ENCODE measurements at regions of chr10 and their contacts with region 1.

Region 1: DNA sequence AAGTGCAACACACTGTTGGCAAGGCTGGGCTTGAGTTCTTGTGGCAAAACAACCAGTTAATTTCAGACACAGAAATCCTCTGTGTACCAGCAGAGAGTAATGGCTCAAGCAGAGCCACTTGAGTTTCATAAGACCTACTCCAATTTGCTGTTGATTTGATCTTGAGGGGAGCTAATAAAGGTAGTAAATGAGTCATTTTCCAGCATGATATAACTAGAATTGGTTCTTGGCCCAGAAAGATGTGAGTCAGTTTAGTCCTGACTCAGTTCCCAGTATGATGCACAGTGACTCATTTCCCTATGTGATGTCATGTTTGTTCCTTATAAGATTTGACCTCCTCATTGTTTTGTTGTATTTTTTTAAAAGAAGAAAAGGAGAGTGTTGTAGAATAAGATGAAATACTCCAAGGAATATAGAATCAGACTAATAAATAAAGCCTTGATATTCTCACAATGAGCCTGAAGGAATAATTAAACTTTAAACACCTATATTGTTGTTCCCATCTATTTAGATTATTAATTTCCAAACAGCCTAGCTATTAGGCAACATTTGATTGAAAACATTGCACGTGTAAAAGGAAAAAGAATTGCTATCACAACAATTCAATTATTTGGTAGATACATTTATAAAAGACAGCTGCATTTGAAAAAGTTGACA is 186.2 kb downstream of the REEP3 start:
- DNase-seq: peak; percentile 58
- H3K4me3 Mint-ChIP-seq: no peak overlapping the region
- H3K27ac Mint-ChIP-seq: peak overlapping the region; percentile 27
- H3K4me1 Mint-ChIP-seq: peaks cover 17% of the 10 kb centered on the region
- H3K27me3 Mint-ChIP-seq: no peaks in the 10 kb centered on the region

Region 2: GRCh38 chr10:62528441-62528840 is 1178.9 kb before region 1 on chr10:
- CTCF ChIA-PET with region 1: no interaction called
- intact Hi-C with region 1: loop called (anchors 2 kb)
- DNase-seq: no peak
- H3K4me3 Mint-ChIP-seq: peak overlapping the region; percentile 19
- H3K27ac Mint-ChIP-seq: peak overlapping the region; percentile 26
- H3K4me1 Mint-ChIP-seq: peaks cover 37% of the 10 kb centered on the region
- H3K27me3 Mint-ChIP-seq: no peaks in the 10 kb centered on the region

Region 3: DNA sequence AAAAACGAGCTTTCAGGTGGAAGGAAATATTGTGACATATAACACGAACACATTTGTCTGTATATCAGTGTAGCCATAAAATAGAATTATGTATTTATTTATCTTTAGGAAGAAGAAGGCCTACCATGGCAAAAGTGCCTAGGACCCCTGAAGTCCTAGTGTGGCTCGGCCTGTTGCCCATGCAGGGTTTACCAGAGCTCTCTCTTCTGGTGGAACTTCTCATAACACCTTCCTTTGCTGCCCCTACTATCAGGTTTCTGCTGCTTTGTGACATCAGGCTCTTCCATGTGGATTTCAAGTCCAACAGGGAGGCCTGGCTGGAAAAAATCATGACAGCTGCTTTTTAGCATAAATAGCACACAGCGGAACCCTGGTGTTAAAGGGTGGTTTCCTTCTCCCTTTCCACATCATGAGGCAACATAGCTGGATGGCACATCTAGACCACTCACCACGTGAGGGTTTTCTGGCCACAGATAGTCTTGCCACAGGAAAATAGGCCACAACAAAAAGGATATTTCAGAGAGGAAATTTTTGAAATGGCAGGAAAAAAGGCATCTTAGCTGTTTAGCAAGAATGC is 947.7 kb before region 1 on chr10:
- CTCF ChIA-PET with region 1: no interaction called
- intact Hi-C with region 1: loop called (anchors 10 kb)
- DNase-seq: no peak
- H3K4me3 Mint-ChIP-seq: no peak overlapping the region
- H3K27ac Mint-ChIP-seq: no peak overlapping the region
- H3K4me1 Mint-ChIP-seq: peaks cover 30% of the 10 kb centered on the region
- H3K27me3 Mint-ChIP-seq: no peaks in the 10 kb centered on the region

Region 4: DNA sequence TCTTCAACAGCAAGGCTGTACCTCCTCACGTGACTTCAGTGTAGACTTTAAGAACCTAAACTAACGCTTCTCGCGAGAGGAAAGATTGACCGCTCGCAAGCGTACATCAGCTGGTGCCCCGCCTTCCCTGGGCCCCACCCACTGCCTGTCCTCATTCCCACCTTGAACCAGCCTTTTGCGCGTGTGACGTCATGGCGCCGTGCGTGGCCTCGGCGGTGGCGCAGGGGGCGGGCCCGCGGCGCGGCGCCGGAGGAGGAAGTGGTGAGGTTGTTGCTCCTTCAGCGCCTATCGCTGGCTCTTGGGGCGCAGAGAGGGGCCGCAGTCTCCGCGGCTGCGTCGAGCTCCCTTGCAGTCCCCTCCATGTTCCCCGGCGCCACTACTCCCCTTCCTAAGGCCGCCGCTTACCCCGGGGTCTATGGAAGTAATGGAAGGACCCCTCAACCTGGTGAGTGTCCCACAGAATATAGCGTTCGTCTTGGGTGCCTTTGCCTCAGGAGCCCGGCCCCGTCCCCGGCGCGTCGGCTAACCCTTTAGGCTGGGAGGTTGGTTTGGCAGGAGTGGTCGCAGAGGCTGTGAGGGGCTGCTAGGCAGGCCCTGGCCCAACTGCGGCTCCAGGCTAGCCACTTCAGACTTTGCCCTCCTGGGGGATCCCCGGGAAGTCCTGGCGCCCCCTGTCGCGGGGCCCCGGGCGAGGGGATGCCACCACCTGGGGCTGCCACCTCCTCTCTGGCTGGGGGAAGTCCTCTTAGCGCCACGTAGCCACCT is 574.1 kb before region 1 on chr10 and contains the start of gene NRBF2:
- CTCF ChIA-PET with region 1: interaction called, 3 read pairs
- intact Hi-C with region 1: loop called (anchors 1 kb)
- DNase-seq: peak; percentile 98
- H3K4me3 Mint-ChIP-seq: peak within 1 kb of the TSS; percentile 89
- H3K27ac Mint-ChIP-seq: peak within 1 kb of the TSS; percentile 92
- H3K4me1 Mint-ChIP-seq: peaks cover 38% of the 10 kb centered on the region
- H3K27me3 Mint-ChIP-seq: no peaks in the 10 kb centered on the region
- total RNA-seq, gene NRBF2: 15.4 to 15.6 TPM

Region 5: DNA sequence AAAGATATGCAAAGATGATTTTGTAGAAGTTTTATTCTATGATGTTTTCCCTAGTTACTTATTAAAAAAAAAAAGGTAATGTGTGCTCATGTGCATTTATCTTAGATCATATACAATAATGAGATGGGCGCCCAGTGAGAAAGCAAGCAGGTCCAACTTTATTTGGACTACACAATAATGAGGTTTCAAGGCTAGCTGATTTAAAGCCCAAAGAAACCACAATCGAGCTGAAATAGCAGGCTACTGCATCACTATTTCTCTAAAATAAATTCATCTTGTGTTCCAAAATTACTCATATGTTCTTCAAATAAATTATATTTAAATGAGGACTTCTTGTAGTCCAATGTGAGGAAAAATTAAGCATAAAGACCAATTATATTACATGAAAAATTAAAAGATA is 351.7 kb before region 1 on chr10:
- CTCF ChIA-PET with region 1: no interaction called
- intact Hi-C with region 1: loop called (anchors 5 kb)
- DNase-seq: no peak
- H3K4me3 Mint-ChIP-seq: no peak overlapping the region
- H3K27ac Mint-ChIP-seq: no peak overlapping the region
- H3K4me1 Mint-ChIP-seq: peaks cover 28% of the 10 kb centered on the region
- H3K27me3 Mint-ChIP-seq: no peaks in the 10 kb centered on the region

Region 6: DNA sequence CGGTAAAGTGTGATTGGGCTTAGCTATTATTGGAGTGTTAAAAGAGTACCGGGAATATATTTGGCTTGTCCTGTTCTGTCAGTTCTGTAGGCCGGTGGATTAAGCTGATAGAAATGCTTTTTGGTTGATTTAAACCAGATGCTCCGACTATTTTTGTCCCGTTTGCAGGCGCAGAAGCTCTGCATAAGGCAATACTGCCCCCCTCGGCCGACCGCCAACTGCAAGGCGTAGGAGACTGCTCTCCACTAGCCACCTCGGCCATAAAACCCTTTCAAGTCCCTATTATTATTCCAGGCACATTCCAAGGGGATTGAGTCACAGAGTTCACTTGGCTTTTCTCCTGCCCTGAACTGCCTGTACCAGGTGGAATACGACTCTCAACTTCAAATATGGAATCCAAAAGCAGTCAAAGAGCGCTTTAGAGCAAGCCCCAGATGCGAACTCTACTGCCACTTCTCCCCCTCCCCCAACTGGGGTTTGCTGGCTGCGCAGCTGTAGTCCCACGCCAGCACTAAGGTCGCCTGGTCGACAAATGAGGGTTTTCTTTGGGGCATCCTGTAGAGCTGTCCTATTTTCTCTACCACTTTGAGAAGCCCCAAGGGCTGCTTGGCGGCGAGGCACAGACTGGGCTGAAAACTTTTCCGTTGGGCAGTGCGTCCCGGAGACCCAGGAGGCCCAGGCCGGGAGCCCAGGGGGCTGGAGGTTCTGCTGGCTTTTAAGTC is 77.9 kb before region 1 on chr10:
- CTCF ChIA-PET with region 1: interaction called, 6 read pairs
- intact Hi-C with region 1: loop called (anchors 1 kb)
- DNase-seq: peak; percentile 89
- H3K4me3 Mint-ChIP-seq: peak overlapping the region; percentile 82
- H3K27ac Mint-ChIP-seq: peak overlapping the region; percentile 69
- H3K4me1 Mint-ChIP-seq: peaks cover 17% of the 10 kb centered on the region
- H3K27me3 Mint-ChIP-seq: no peaks in the 10 kb centered on the region

Measured in activated naive CD4-positive, alpha-beta T cell treated with anti-CD3 and anti-CD28 coated beads for 36 hours (primary cell).